Endothelial cell of umbilical vein (primary cell): ENCODE measurements at regions of chr17 and their contacts with region 1.

Region 1: DNA sequence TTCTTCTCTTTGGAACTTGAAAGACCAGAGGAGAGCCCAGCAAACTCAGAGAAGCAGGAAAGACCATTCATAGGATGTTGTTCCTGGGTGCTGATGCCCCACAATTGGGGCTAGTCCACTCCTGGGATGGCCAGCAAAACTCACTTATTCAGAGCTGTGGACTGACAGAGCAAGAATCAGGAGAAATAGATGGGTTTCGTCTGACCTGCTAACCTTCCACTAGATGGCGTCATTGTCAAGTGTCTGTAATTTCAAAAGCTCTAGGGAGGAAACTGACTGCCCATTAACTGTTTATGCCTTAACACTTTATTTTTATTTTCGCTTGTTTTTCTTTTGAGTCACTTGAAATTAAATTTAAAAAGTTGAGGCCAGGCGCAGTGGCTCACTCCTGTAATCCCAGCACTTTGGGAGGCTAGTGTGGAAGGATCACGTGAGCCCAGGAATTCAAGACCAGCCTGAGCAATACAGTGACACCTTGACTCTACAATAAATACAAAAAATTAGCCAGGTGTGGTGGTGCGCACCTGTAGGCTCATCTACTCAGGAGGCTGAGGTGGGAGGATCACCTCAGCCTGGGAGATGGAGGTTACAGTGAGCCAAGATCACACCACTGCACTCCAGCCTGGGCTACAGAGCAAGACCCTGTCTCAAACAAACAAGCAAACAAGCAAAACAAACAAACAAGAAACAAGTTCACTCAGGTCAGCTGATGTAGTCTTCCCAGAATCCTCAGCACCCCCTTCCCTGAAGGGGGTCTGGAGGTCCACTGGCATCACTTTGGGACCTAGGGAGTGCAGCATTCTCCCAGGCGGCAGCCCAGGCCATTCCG is 28.6 kb upstream of the MILR1 start:
- DNase-seq: peak; percentile 76
- H3K4me3 ChIP-seq: no peak overlapping the region
- H3K27ac ChIP-seq: no peak overlapping the region
- H3K4me1 ChIP-seq: peaks cover 6% of the 10 kb centered on the region
- H3K27me3 ChIP-seq: no peaks in the 10 kb centered on the region
- CTCF ChIP-seq: peak; percentile 74 to 75
- POLR2A ChIP-seq: no peak

Region 2: DNA sequence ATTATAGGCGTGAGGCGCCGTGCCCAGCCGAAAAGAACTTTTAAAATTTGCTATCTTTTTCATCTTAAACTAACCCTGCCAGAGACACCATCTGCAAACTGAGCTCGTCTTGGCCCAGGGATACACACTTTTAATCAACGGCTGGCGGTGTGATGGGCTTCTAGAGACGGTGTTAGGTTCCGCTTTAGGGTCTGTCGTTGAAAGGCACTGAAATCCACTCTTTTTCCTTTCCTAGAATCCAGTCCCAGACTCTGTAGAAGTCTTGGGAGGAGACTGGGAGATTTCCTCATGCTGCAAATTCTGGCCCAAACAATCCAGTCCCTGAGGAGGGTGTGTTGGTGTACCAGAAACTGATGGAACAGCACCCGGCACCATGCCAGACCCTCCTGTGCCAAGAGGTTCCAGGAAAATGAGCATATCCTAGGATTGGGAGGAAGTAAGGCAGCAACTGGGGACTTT is 105.3 kb before region 1 on chr17:
- CTCF ChIA-PET with region 1: interaction called, 203 read pairs
- POLR2A ChIA-PET with region 1: no interaction called
- dilution Hi-C with region 1: no loop called
- intact Hi-C with region 1: no loop called
- DNase-seq: peak; percentile 90
- H3K4me3 ChIP-seq: no peak overlapping the region
- H3K27ac ChIP-seq: peak overlapping the region; percentile 64
- H3K4me1 ChIP-seq: peaks cover 36% of the 10 kb centered on the region
- H3K27me3 ChIP-seq: no peaks in the 10 kb centered on the region
- CTCF ChIP-seq: no peak
- POLR2A ChIP-seq: no peak

Region 3: GRCh38 chr17:64357191-64357981 is 63.0 kb before region 1 on chr17:
- CTCF ChIA-PET with region 1: interaction called, 46 read pairs
- POLR2A ChIA-PET with region 1: interaction called, 3 read pairs
- dilution Hi-C with region 1: no loop called
- intact Hi-C with region 1: loop called (anchors 1 kb)
- DNase-seq: peak; percentile 91
- H3K4me3 ChIP-seq: no peak overlapping the region
- H3K27ac ChIP-seq: peak overlapping the region; percentile 38
- H3K4me1 ChIP-seq: peaks cover 60% of the 10 kb centered on the region
- H3K27me3 ChIP-seq: no peaks in the 10 kb centered on the region
- CTCF ChIP-seq: no peak
- POLR2A ChIP-seq: peak; percentile 45

Region 4: DNA sequence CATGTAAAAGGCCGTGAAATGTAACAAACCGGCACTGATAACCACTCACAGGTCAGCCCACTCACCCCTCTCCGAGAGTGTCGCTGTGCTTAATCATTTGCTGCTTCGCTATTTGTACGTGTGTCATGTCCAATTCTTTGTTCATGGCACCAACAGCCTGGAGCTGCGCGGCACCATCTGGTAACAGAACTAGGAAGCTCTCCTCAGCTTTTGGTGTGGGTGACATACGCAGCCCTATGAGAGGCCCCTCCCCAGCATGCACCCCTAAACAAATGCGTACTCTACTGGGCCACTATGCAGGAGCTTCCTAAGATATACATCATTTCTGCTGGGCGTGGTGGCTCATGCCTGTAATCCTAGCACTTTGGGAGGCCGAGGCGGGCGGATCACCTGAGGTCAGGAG is 27.4 kb before region 1 on chr17:
- CTCF ChIA-PET with region 1: interaction called, 20 read pairs
- POLR2A ChIA-PET with region 1: interaction called, 6 read pairs
- dilution Hi-C with region 1: no loop called
- intact Hi-C with region 1: loop called (anchors 1 kb)
- DNase-seq: no peak
- H3K4me3 ChIP-seq: no peak overlapping the region
- H3K27ac ChIP-seq: no peak overlapping the region
- H3K4me1 ChIP-seq: peaks cover 16% of the 10 kb centered on the region
- H3K27me3 ChIP-seq: no peaks in the 10 kb centered on the region
- CTCF ChIP-seq: no peak
- POLR2A ChIP-seq: no peak

Region 5: DNA sequence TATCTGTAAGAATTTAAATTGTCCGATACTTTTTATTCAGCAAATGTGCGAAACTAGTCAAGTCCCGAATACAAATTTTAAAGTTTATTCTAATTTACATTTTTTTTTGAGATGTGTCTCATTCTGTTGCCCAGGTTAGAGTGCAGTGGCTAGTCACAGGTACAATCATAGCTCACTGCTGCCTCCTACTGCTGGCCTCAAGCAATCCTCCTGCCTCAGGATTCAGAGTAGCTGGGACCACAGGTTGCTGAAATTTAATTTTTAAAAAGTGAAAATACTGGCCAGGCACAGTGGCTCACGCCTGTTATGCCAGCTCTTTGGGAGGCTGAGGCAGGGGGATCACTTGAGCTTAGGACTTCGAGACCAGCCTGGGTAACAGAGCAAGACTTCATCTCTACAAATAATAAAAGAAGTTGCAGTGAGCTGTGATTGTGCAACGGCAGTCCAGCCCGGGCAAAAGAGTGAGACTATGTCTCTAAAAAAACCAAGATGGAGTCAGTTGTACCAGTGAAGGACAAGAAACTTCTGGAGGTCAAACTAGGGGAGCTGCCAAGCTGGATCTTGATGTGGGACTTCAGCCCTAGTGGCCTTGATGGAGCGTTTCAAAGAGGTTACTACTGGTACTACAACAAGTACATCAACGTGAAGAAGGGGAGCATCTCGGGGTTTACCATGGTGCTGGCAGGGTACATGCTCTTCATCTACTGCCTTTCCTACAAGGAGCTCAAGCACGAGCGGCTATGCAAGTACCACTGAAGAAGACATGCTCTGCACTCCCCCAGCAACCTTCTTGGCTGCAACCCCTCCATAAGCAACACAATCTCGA is 70.9 kb after region 1 on chr17:
- CTCF ChIA-PET with region 1: interaction called, 345 read pairs
- POLR2A ChIA-PET with region 1: interaction called, 8 read pairs
- dilution Hi-C with region 1: no loop called
- intact Hi-C with region 1: loop called (anchors 1 kb)
- DNase-seq: peak; percentile 58
- H3K4me3 ChIP-seq: no peak overlapping the region
- H3K27ac ChIP-seq: no peak overlapping the region
- H3K4me1 ChIP-seq: peaks cover 15% of the 10 kb centered on the region
- H3K27me3 ChIP-seq: no peaks in the 10 kb centered on the region
- CTCF ChIP-seq: peak; percentile 74 to 76
- POLR2A ChIP-seq: no peak

Region 6: DNA sequence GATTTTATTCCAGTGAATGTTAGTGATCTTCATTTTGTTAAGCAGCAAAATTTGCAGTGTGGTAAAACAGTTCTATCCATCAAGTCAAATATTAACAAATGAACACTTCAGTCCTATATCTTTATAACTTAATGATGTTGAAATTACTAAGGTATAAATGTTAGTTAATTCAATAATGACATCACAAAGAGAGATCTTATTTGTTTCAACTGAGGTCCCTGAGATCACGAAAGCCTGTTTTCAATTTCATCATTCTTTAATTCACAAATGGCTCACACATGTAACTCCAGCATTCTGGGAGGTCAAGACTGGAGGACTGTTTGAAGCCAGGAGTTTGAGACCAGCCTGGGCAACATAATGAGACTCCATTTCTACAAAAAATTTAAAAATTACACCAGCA is 227.9 kb after region 1 on chr17:
- CTCF ChIA-PET with region 1: no interaction called
- POLR2A ChIA-PET with region 1: no interaction called
- dilution Hi-C with region 1: no loop called
- intact Hi-C with region 1: loop called (anchors 2 kb)
- DNase-seq: no peak
- H3K4me3 ChIP-seq: no peak overlapping the region
- H3K27ac ChIP-seq: no peak overlapping the region
- H3K4me1 ChIP-seq: peaks cover 24% of the 10 kb centered on the region
- H3K27me3 ChIP-seq: no peaks in the 10 kb centered on the region
- CTCF ChIP-seq: no peak
- POLR2A ChIP-seq: no peak